Left ventricle myocardium superior (tissue), 1 donor: ENCODE measurements at regions of chr17 and their contacts with region 1.

Region 1: GRCh38 chr17:66906321-66907278 is 57.9 kb upstream of the CACNG4 start:
- DNase-seq: peak; percentile 84
- ATAC-seq: peak; percentile 45

Region 2: DNA sequence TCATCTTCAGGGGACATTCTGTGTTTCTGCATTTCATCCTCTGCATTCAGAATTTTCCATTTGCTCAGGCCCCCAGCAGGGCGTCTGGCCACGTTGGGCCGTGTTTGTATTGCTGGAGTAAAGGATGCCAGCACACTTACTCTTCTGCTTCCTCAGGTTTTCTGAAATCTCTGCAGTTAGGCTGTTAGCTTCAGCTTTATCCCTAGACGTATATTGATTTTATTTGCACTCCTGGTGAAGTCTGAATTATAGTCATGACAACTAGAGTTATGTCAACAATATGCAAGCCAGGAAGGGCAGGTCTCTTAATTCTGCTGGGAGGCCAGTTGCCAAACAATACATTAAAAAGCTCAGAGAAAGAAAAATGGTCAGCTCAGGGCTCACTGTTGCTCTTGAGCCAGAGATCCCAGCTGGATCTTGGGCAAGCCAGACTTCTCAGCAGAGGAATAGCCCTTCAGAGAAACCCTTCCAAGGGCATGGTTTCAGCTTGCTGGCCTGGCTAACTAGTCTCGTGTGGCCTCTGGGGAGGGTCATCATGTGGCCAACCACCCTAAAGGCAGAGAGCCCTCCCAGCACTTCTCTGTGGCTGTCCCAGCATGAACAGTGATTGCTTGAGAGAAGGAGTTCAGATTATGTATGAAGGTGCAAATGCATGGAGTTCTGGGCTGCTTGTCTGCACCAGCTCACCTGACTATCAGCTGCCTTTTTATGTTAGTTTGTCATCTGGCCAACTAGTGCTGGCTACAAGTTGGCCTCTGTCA is 181.8 kb before region 1 on chr17:
- intact Hi-C with region 1: loop called (anchors 5 kb)
- DNase-seq: no peak
- ATAC-seq: peak; percentile 66

Region 3: DNA sequence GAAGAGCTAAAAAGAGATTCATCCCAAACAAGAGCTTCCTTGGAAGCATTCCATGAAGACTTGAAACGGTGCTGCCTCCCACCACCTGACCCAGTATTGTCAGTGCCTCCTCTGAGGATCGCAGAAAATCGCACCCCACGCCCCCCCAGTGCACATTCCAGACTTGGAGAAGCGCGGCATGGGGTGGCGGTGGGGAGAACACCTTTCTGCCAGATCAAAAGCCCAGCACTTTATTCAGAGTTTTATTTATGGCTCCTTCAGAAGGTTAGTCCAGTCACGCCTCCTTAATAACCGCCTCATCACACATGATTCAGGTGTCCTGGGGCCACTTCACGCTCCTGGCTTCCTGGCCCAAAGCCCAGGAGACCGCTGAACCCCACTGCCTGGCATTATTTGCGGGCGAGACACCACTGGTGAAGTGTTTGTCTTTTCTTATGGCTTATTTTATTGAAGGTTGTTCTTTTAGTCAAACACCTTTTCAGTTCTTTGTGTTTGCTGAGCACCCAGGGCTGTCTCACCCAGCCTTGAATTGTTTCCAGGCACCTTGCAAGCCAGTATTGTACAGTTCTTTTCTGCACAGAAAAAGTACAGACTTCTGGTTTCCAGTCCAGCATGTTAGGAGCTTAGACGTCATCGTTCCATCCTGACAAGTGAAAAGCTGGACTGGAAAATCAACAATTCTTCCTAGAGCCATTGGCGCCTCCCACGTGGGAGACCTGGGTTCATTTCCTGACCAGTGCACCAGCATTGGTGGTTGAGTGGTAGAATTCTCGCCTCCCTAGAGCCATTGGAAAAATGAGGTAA is 151.3 kb before region 1 on chr17:
- intact Hi-C with region 1: no loop called
- DNase-seq: no peak
- ATAC-seq: no peak

Region 4: DNA sequence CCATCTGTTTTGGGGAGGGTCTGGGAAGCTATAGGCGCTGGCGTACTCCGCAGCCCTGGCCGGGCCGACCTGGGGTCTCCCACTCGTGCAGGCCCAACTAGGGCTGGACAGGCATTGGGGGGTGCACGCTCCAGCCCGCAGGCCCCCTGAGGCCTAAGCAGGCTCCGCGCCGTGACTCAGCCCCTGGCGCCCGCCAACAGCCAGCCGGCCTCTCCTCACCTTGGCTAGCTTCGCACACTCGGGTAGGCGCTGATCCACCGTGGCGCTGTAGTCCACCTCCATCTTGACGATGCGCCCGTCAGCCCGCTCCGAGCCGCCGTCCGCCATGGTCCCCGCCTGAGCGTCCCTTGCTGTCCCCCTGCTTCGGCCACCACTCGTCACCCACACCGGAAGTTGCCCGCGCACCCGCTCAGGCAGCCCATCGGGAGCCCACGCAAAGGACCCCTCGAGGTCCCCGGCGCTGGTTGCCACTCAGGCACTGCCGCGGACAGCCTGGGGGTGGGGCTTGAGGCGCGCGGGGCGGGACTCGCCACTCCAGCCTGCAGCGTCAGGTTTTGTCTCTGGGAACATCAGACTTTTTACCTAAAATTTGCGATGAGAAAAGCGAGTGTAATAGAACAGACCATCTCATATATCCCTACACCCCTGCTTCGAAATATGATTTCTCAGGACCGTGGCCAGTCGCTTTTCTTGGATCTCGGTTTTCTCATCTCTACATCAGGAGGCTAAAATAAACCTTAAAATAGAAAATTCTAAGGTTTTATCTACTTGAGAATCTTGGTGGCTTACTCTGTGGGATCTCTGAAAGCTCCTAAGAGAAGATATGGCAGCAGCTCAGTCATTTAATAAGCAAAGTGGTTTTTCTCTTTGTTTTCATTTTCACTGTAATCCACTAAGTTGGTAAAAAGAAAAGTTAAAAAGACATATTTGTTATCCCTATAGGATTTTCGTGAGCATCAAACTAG is 459.9 kb after region 1 on chr17 and contains the start of gene PSMD12:
- intact Hi-C with region 1: no loop called
- DNase-seq: peak; percentile 97
- ATAC-seq: peak; percentile 98
- total RNA-seq, gene PSMD12: 47.0 TPM